ENCODE measurements at regions of chr3 and their contacts with region 1.

Region 1: GRCh38 chr3:15309662-15310335 is 22.6 kb downstream of the SH3BP5 start:
- DNase-seq: no peak
- ATAC-seq: no peak

Region 2: GRCh38 chr3:14947886-14948555 is 361.8 kb before region 1 on chr3:
- intact Hi-C with region 1: no loop called
- DNase-seq: peak; percentile 97
- ATAC-seq: peak; percentile 96 to 99

Region 3: DNA sequence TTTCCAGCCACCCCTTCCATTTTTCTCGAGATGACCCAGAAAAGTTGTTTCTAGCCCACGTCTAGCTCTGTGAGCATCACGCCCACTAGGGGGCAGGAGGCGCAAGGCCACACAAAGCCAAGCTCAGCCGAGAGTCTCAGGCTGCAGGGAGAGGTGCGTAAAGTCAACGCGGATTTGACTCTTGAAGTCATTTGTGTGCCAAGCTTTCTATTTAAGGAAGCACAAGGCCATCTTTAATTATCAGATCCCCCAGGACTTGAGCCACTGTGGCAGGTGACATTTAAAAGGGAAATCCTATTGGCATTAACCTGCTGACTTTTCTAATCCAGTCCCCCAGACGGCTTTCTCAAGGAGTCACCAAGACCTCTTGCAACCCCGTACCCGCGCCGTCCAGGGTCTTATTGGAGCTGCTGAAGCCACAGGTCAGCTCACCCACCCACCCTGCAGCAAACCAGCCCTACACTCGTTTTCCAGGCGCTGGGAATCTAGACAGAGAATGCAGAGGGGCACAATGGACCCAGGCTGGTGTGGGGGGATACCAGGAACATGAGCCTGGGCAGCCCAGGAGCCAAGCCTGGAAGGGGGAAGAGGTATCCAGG is 41.7 kb before region 1 on chr3:
- intact Hi-C with region 1: no loop called
- DNase-seq: peak; percentile 92
- ATAC-seq: peak; percentile 73 to 80

Region 4: GRCh38 chr3:15324379-15324808 is 14.6 kb after region 1 on chr3:
- intact Hi-C with region 1: loop called in 1 of 2 experiments (anchors 1 kb)
- DNase-seq: no peak
- ATAC-seq: peak; percentile 41 to 45

Measured in left cardiac atrium (tissue), 4 donors.